Prostate gland (tissue), 2 donors: ENCODE measurements at regions of chr21 and their contacts with region 1.

Region 1: DNA sequence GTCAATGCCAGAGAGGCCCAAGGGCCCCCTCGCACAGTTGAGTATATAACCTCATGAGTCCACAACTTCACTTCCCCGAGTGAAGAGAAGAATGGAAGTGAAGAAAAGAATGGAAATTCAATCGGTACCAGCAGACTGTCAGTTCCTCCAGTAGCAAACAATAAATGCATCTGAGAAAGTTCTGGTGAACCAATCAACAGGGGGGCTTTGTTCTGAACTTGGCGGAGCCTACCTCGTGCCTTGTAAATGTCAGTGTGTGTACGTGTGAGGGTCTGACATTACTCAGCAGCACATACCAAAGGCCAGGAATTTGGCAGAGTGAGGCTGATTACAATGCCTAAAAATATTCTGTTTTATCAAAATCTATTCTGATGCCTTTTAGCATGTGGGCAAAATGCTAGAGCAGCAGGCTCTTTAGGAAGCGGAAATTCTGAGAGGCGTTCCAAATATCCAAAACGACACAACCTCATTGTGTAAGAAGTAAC is 238.5 kb downstream of the LTN1 start:
- DNase-seq: peak; percentile 31
- H3K4me3 ChIP-seq: no peak overlapping the region
- H3K27ac ChIP-seq: peak overlapping the region; percentile 43 to 58
- H3K4me1 ChIP-seq: no peaks in the 10 kb centered on the region
- H3K27me3 ChIP-seq: no peaks in the 10 kb centered on the region
- CTCF ChIP-seq: no peak
- POLR2A ChIP-seq: no peak

Region 2: GRCh38 chr21:28699596-28700259 is 54.4 kb before region 1 on chr21:
- intact Hi-C with region 1: no loop called
- DNase-seq: peak; percentile 71
- H3K4me3 ChIP-seq: no peak overlapping the region
- H3K27ac ChIP-seq: peak overlapping the region; percentile 7 to 38
- H3K4me1 ChIP-seq: no peaks in the 10 kb centered on the region
- H3K27me3 ChIP-seq: no peaks in the 10 kb centered on the region
- CTCF ChIP-seq: no peak
- POLR2A ChIP-seq: no peak

Region 3: DNA sequence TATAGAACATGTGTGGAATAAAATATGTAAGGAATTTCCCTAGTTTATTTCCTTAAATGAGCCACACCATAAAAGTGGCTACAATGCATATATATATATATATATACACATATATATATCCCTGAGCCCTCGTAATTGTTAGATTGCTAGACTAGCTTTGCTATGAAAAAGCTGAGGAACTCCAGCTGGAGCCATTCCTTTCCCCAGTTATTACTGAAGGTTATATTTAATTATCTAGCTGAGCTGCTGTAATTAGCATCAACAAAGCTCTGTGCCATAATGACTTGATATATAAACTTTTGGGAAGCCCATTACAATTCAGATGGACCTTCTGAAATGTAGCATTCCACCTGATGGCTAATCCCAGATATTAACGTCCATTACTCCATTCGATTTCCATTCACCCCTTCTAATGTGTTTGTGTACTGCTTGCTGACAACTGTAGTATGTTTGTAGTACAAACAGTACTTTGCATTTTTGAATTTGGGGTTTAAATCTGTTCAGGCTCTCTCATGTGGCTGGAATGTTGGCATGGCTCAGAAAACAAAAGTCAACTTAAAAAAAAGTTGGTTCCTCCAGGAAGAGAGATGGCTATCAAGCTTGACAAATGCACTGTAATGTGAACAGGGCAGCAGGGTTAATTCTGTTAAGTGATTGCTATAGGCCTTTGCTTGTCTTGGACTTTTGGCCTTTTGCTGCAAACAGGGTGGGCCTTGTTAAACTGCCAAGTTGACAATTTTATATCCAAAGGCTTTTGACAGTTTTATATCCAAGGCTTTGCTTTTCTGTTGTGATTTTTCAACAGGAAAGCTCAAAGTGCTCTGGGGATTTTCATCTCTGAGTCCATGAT is 68.5 kb after region 1 on chr21:
- intact Hi-C with region 1: loop called (anchors 5 kb)
- DNase-seq: peak; percentile 36
- H3K4me3 ChIP-seq: no peak overlapping the region
- H3K27ac ChIP-seq: peak overlapping the region; percentile 17 to 57
- H3K4me1 ChIP-seq: peaks cover 4% of the 10 kb centered on the region
- H3K27me3 ChIP-seq: no peaks in the 10 kb centered on the region
- CTCF ChIP-seq: no peak
- POLR2A ChIP-seq: no peak

Region 4: DNA sequence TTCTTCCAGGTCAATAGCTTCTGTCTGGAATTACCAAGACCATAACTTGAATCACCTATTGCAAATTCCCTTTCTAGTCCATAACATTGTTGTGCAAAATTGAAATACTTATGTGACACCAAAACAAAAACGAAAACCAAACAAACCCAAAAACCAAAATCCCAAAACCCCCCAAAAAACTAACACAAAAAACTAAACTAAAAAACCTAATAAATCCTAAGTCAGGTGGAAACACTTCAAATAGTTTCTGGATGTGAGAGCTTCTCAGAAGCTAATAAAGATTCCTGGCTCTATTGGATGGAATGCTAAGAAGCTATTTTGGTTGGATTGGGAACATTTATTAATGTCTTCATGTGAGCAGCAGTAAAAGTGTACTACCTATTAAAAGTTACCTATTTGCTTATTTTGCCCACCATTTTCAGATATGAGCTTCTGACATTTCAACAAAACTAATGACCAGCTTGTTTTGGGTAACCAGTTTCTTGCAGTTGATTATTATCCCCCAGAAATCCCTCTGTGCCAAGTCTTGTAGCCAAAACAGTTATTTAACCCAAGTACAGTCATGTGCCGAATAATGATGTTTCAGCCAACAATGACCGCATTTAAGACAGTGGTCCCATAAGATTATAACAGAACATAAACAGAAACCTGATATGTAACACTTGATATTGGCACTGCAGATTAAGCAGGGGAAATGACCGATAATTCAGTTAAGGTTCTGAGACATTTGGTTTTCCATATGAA is 162.2 kb after region 1 on chr21:
- intact Hi-C with region 1: loop called (anchors 5 kb)
- DNase-seq: no peak
- H3K4me3 ChIP-seq: no peak overlapping the region
- H3K27ac ChIP-seq: peak overlapping the region in 1 of 2 donors; percentile 3
- H3K4me1 ChIP-seq: no peaks in the 10 kb centered on the region
- H3K27me3 ChIP-seq: no peaks in the 10 kb centered on the region
- CTCF ChIP-seq: no peak
- POLR2A ChIP-seq: no peak

Region 5: GRCh38 chr21:28959367-28960099 is 205.4 kb after region 1 on chr21:
- intact Hi-C with region 1: no loop called
- DNase-seq: no peak
- H3K4me3 ChIP-seq: no peak overlapping the region
- H3K27ac ChIP-seq: no peak overlapping the region
- H3K4me1 ChIP-seq: peaks cover 6% of the 10 kb centered on the region
- H3K27me3 ChIP-seq: no peaks in the 10 kb centered on the region
- CTCF ChIP-seq: no peak
- POLR2A ChIP-seq: no peak